ENCODE measurements at regions of chr9 and their contacts with region 1.

Region 1: DNA sequence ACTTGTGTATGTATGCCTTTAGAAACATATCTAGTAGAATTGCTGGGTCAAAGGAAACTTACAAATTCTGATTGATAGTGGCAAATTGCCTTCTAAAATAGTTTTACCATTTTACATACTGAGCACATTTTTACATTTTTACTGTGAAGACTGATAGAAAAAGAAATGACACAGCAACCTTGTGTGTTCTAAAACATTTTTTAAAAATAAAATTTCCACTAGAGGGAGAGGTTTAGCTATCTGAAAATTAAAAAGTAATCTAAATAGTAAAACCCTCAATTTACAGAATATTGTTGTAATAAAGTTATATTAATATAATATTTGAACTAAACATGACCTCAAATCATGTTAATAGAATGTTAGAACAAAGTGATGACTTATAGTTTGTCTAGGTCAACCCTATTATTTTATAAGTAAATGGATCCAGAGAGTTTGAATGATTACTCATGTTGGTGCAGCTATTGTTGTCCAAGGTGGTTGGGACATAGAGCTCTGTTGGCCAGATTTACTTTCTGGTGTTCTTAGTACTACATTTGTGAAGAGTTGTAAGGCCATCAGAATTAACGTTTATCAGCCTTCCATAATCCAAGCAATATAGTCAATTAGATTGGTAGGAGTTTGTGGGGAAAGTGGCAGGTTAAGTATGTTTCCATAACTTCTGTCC is 17.2 kb downstream of the CENPP start:
- DNase-seq: no peak
- H3K4me3 ChIP-seq: no peak overlapping the region
- H3K27ac ChIP-seq: no peak overlapping the region
- H3K4me1 ChIP-seq: no peaks in the 10 kb centered on the region
- H3K27me3 ChIP-seq: no peaks in the 10 kb centered on the region
- CTCF ChIP-seq: peak in 2 of 3 donors; percentile 22 to 50
- EP300 ChIP-seq: no peak
- POLR2A ChIP-seq: no peak

Region 2: DNA sequence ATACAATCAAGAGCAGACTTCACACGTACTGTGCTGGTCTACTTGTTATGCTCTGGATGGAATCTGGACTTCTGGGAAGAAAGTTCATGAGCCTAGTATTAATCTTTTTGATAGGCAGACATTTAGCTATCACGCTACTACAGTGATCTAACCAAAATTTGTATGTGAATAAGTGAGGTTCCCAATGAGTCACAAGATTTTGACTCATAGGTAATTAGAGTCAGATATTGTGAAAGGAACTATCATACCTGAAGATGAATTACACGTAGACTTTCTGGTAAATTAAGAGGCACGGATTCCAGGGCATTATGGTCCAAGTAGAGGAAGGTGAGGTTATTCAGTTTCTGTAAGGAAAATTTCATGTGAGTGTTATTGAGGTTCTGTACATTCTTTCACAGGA is 43.0 kb after region 1 on chr9:
- intact Hi-C with region 1: no loop called
- DNase-seq: no peak
- H3K4me3 ChIP-seq: no peak overlapping the region
- H3K27ac ChIP-seq: peak overlapping the region in 1 of 2 donors; percentile 20
- H3K4me1 ChIP-seq: peaks cover 1% of the 10 kb centered on the region
- H3K27me3 ChIP-seq: no peaks in the 10 kb centered on the region
- CTCF ChIP-seq: no peak
- EP300 ChIP-seq: no peak
- POLR2A ChIP-seq: no peak

Region 3: DNA sequence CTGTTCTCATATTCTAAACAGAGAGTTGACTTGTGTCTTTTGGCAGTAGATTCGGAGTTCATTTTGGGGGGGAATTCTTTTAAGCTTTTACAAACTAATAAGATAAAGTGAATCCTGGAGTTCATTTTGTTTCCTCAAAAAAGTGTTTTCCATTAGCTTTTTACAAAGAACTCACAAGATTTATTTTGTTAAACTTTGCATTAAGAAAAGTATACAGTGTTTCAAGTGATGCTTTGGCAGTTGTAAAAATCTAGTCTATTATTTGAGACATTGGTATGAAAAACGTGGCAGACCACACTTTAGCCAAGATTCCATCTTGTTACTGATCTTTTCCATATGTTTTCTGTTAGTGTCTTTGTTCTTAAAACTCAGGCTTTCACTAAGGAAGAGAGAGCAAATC is 82.5 kb after region 1 on chr9:
- intact Hi-C with region 1: loop called in 1 of 4 experiments (anchors 5 kb)
- DNase-seq: no peak
- H3K4me3 ChIP-seq: no peak overlapping the region
- H3K27ac ChIP-seq: peak overlapping the region in 1 of 2 donors; percentile 60
- H3K4me1 ChIP-seq: peaks cover 8% of the 10 kb centered on the region
- H3K27me3 ChIP-seq: no peaks in the 10 kb centered on the region
- CTCF ChIP-seq: no peak
- EP300 ChIP-seq: no peak
- POLR2A ChIP-seq: no peak

Region 4: DNA sequence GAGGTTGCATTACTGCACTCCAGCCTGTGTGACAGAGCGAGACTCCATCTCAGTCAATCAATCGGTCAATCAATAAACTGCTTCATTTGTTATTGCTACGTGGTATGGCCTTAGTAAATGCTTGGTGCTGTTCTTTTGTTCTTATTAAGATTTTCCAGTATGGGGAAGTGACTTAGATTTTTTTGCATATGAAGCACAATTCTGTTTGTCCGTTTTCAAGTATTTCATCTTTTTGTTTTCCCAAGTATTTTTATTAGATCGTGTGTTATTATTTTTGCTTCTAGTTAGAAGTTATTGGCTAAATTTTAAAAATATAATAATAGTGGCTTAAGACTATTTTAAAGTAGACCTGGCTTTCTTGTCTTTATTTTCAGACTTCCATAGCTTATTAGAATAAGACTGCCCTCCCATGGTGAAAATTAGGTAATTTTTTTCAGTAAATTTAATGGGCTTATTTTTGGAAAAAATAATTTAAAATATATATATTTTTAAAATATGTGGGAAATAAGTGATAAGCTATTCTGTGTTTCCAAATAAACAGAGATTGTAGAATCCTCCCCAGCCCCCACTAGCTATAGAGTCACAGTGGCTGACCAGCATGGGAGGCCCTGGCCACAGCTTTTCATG is 96.1 kb after region 1 on chr9:
- intact Hi-C with region 1: loop called in 3 of 4 experiments (anchors 5 kb)
- DNase-seq: no peak
- H3K4me3 ChIP-seq: no peak overlapping the region
- H3K27ac ChIP-seq: no peak overlapping the region
- H3K4me1 ChIP-seq: peaks cover 2% of the 10 kb centered on the region
- H3K27me3 ChIP-seq: no peaks in the 10 kb centered on the region
- CTCF ChIP-seq: no peak
- EP300 ChIP-seq: no peak
- POLR2A ChIP-seq: no peak

Measured in ovary (tissue), 10 donors.